PC-3 (cell line): ENCODE measurements at regions of chr10 and their contacts with region 1.

Region 1: DNA sequence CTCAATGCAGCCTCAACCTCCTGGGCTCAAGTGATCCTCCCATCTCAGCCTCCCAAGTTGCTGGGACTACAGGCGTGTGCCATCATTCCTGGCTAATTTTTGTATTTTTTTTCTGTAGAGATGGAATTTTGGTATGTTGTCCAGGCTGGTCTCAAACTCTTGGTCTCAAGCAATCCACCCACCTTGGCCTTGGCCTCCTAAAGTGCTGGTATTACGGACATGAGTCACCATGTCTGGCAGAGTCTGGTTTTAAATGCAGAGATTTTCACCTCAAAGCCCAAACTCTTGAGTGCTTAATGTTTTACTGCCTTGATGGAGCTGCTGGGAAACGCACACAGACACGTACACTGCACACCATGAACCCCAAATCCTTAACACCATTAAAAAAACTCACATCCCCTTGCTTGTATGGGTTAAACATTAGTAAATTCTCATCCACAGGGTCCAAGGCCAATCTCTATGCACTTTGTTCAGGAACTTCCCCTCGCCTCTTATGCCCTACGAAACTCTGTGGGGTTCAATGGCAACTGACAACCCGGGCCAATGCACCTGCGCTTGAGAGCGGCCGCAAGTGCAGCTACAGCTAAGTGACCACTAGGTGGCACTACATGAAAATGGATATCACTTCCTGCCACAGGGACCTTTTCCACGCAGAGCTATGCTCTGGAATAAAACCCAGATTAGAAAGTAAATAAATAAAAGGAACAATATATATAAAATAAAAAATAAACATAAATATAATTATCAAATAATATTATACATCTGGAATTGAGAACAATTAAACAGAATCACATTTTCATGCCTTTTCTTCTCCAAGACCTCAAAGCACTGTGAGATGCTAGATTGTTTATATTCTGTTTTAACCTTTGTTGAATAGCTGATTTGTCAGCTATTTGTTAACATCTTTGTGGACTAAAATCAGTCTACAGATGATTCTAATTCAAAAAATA is 66.9 kb upstream of the AFAP1L2 start:
- DNase-seq: peak; percentile 70
- ATAC-seq: peak; percentile 84
- H3K4me3 ChIP-seq: no peak overlapping the region
- H3K27ac ChIP-seq: no peak overlapping the region
- H3K4me1 ChIP-seq: peaks cover 14% of the 10 kb centered on the region
- H3K27me3 ChIP-seq: no peaks in the 10 kb centered on the region
- CTCF ChIP-seq: peak; percentile 72

Region 2: GRCh38 chr10:114379631-114380041 is 91.6 kb before region 1 on chr10:
- CTCF ChIA-PET with region 1: no interaction called
- POLR2A ChIA-PET with region 1: no interaction called
- intact Hi-C with region 1: no loop called
- DNase-seq: no peak
- ATAC-seq: no peak
- H3K4me3 ChIP-seq: no peak overlapping the region
- H3K27ac ChIP-seq: no peak overlapping the region
- H3K4me1 ChIP-seq: peaks cover 11% of the 10 kb centered on the region
- H3K27me3 ChIP-seq: no peaks in the 10 kb centered on the region
- CTCF ChIP-seq: no peak

Region 3: GRCh38 chr10:114703377-114704107 is 232.3 kb after region 1 on chr10:
- CTCF ChIA-PET with region 1: interaction called, 6 read pairs
- POLR2A ChIA-PET with region 1: no interaction called
- intact Hi-C with region 1: loop called (anchors 2 kb)
- DNase-seq: peak; percentile 53
- ATAC-seq: peak; percentile 40
- H3K4me3 ChIP-seq: no peak overlapping the region
- H3K27ac ChIP-seq: no peak overlapping the region
- H3K4me1 ChIP-seq: peaks cover 6% of the 10 kb centered on the region
- H3K27me3 ChIP-seq: no peaks in the 10 kb centered on the region
- CTCF ChIP-seq: peak; percentile 81